Activated B cell treated with CpG ODN at 0.5 μM for 24 hours (primary cell): ENCODE measurements at regions of chr15 and their contacts with region 1.

Region 1: DNA sequence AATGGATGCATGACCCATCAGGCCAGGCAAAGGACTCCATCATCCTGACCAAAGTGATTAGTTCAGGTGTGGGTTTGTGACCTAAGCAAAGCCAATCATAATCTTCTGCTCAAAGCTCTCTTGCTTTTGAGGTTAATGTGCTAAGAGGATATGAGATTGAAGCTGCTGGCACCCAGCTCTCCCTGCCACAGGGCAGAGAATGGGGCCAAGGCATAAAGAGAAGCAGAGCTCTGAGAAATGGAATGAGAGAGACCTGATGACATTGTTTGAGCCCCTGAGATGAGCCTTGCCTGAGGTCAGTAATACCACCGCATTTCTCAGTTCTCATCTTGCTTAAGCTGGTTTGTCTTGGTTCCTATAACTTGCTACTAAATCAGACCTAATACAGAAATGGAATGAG is 6.4 kb upstream of the PARP6 start:
- DNase-seq: no peak
- ATAC-seq: no peak
- H3K4me3 Mint-ChIP-seq: no peak overlapping the region
- H3K27ac Mint-ChIP-seq: no peak overlapping the region
- H3K4me1 Mint-ChIP-seq: peaks cover 3% of the 10 kb centered on the region
- H3K27me3 Mint-ChIP-seq: no peaks in the 10 kb centered on the region
- CTCF ChIP-seq: no peak

Region 2: GRCh38 chr15:72222259-72222832 is 56.4 kb before region 1 on chr15:
- CTCF ChIA-PET with region 1: interaction called, 16 read pairs
- POLR2A ChIA-PET with region 1: interaction called, 113 read pairs
- intact Hi-C with region 1: no loop called
- DNase-seq: no peak
- ATAC-seq: no peak
- H3K4me3 Mint-ChIP-seq: no peak overlapping the region
- H3K27ac Mint-ChIP-seq: peak overlapping the region; percentile 30
- H3K4me1 Mint-ChIP-seq: peaks cover 61% of the 10 kb centered on the region
- H3K27me3 Mint-ChIP-seq: no peaks in the 10 kb centered on the region
- CTCF ChIP-seq: no peak